K562 (cell line): ENCODE measurements at regions of chr7 and their contacts with region 1.

Region 1: GRCh38 chr7:27324246-27324645 is 81.6 kb downstream of the EVX1 start:
- DNase-seq: no peak
- ATAC-seq: no peak
- H3K4me3 ChIP-seq: no peak overlapping the region
- H3K27ac ChIP-seq: no peak overlapping the region
- H3K4me1 ChIP-seq: no peaks in the 10 kb centered on the region
- H3K27me3 ChIP-seq: peaks cover 2 to 4% of the 10 kb centered on the region in 2 experiments; a peak in 3 of 5 replicates
- CTCF ChIP-seq: no peak
- EP300 ChIP-seq: no peak
- POLR2A ChIP-seq: no peak
- RAD21 ChIP-seq: no peak

Region 2: GRCh38 chr7:27283558-27283957 is 40.7 kb before region 1 on chr7:
- CTCF ChIA-PET with region 1: no interaction called
- POLR2A ChIA-PET with region 1: no interaction called
- in situ Hi-C with region 1: no loop called
- intact Hi-C with region 1: loop called (anchors 5 kb)
- DNase-seq: no peak
- ATAC-seq: no peak
- H3K4me3 ChIP-seq: no peak overlapping the region
- H3K27ac ChIP-seq: no peak overlapping the region
- H3K4me1 ChIP-seq: no peaks in the 10 kb centered on the region
- H3K27me3 ChIP-seq: 0 out of 5 replicates have a peak, but pooled peaks cover 0 to 4% of the 10 kb centered on the region in 2 experiments
- CTCF ChIP-seq: no peak
- EP300 ChIP-seq: no peak
- POLR2A ChIP-seq: no peak
- RAD21 ChIP-seq: no peak

Region 3: GRCh38 chr7:27459021-27459730 is 134.9 kb after region 1 on chr7:
- CTCF ChIA-PET with region 1: no interaction called
- POLR2A ChIA-PET with region 1: no interaction called
- in situ Hi-C with region 1: no loop called
- intact Hi-C with region 1: no loop called
- DNase-seq: no peak
- ATAC-seq: no peak
- H3K4me3 ChIP-seq: no peak overlapping the region
- H3K27ac ChIP-seq: no peak overlapping the region
- H3K4me1 ChIP-seq: no peaks in the 10 kb centered on the region; a peak in 1 of 5 replicates
- H3K27me3 ChIP-seq: peaks cover 0 to 2% of the 10 kb centered on the region in 2 experiments; a peak in 3 of 5 replicates
- CTCF ChIP-seq: no peak
- EP300 ChIP-seq: no peak
- POLR2A ChIP-seq: no peak
- RAD21 ChIP-seq: no peak